ENCODE measurements at regions of chr6 and their contacts with region 1.

Region 1: GRCh38 chr6:42726485-42727086 is 4.2 kb upstream of the PRPH2 start:
- DNase-seq: peak; percentile 61
- H3K4me3 Mint-ChIP-seq: peak overlapping the region; percentile 81
- H3K27ac Mint-ChIP-seq: peak overlapping the region; percentile 98
- H3K4me1 Mint-ChIP-seq: peaks cover 19% of the 10 kb centered on the region
- H3K27me3 Mint-ChIP-seq: peaks cover 6% of the 10 kb centered on the region

Region 2: GRCh38 chr6:42661540-42662153 is 64.9 kb before region 1 on chr6:
- intact Hi-C with region 1: loop called (anchors 1 kb)
- DNase-seq: peak; percentile 74
- H3K4me3 Mint-ChIP-seq: no peak overlapping the region
- H3K27ac Mint-ChIP-seq: no peak overlapping the region
- H3K4me1 Mint-ChIP-seq: peaks cover 3% of the 10 kb centered on the region
- H3K27me3 Mint-ChIP-seq: no peaks in the 10 kb centered on the region

Region 3: GRCh38 chr6:42694586-42694985 is 32.0 kb before region 1 on chr6:
- intact Hi-C with region 1: loop called (anchors 1 kb)
- DNase-seq: no peak
- H3K4me3 Mint-ChIP-seq: no peak overlapping the region
- H3K27ac Mint-ChIP-seq: no peak overlapping the region
- H3K4me1 Mint-ChIP-seq: peaks cover 27% of the 10 kb centered on the region
- H3K27me3 Mint-ChIP-seq: no peaks in the 10 kb centered on the region